Activated naive CD4-positive, alpha-beta T cell treated with anti-CD3 and anti-CD28 coated beads for 36 hours (primary cell): ENCODE measurements at regions of chr10 and their contacts with region 1.

Region 1: GRCh38 chr10:72364239-72364777 is 9.6 kb upstream of the DNAJB12 start:
- DNase-seq: peak; percentile 94
- H3K4me3 Mint-ChIP-seq: no peak overlapping the region
- H3K27ac Mint-ChIP-seq: peak overlapping the region; percentile 74
- H3K4me1 Mint-ChIP-seq: peaks cover 10% of the 10 kb centered on the region
- H3K27me3 Mint-ChIP-seq: no peaks in the 10 kb centered on the region

Region 2: DNA sequence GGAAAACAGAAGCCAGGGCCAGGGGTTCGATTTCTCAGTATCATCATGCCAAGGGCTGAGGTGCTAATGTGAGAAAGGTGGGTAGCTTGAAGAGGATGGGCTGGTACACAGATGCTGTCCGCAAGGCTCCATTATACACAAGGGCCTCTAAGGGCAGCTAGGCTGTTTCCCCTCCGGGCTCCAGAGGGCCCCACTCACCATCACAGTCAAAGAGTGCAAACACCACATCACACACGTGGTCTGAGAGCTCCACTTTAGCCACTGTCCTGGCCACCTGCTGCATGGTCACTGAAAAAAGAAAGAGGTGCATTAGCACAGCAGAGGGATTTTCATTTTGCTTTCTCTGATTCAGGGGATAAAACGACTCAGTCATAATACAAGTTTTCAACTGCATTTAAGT is 11.3 kb after region 1 on chr10:
- CTCF ChIA-PET with region 1: interaction called, 17 read pairs
- intact Hi-C with region 1: no loop called
- DNase-seq: no peak
- H3K4me3 Mint-ChIP-seq: no peak overlapping the region
- H3K27ac Mint-ChIP-seq: no peak overlapping the region
- H3K4me1 Mint-ChIP-seq: peaks cover 2% of the 10 kb centered on the region
- H3K27me3 Mint-ChIP-seq: no peaks in the 10 kb centered on the region

Region 3: DNA sequence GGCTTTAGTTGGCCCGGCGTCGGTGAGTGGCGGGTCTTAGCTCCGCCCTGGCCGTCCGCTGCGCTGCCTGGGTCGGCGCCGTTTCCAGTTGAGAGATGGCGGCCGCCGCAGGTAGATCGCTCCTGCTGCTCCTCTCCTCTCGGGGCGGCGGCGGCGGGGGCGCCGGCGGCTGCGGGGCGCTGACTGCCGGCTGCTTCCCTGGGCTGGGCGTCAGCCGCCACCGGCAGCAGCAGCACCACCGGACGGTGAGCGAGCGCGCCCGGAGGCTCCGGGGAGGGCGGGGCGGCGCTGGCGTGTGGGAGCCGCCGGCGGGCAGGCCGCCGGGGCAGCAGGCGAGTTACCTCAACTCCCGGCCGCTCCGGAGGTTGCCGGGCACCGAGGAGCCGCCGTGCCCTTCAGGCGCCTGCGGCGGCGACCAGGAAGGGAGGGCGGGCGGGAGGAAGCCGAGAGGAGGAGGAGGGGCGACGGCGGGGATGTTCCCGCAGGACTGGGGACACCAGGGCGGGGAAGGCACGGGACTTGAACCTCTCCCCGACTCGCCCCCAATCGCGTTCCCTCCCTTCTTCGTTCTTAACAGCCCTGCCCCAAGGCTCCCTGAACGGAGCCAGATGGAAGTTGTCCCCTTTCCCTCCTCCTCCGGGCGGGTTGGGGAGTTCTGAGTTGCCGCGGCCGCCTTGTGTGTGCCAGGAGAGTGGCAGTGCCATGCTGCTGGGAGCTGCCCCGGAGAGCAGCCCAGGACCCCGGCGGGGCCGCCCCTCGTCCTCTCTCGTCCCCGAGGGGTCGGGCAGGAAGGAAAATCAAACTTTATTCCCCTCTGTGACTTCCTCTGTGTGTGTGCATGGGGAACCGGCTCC is 328.0 kb after region 1 on chr10 and contains the start of gene MCU:
- CTCF ChIA-PET with region 1: interaction called, 11 read pairs
- intact Hi-C with region 1: loop called (anchors 1 kb)
- DNase-seq: peak; percentile 95
- H3K4me3 Mint-ChIP-seq: peak within 1 kb of the TSS; percentile 83
- H3K27ac Mint-ChIP-seq: no peak within 1 kb of the TSS
- H3K4me1 Mint-ChIP-seq: peaks cover 32% of the 10 kb centered on the region
- H3K27me3 Mint-ChIP-seq: no peaks in the 10 kb centered on the region
- total RNA-seq, gene MCU: 23.6 to 25.6 TPM

Region 4: GRCh38 chr10:72875250-72876055 is 511.1 kb after region 1 on chr10:
- CTCF ChIA-PET with region 1: interaction called, 11 read pairs
- intact Hi-C with region 1: loop called (anchors 1 kb)
- DNase-seq: peak; percentile 7
- H3K4me3 Mint-ChIP-seq: no peak overlapping the region
- H3K27ac Mint-ChIP-seq: no peak overlapping the region
- H3K4me1 Mint-ChIP-seq: no peaks in the 10 kb centered on the region
- H3K27me3 Mint-ChIP-seq: no peaks in the 10 kb centered on the region

Region 5: GRCh38 chr10:73159038-73159648 is 794.8 kb after region 1 on chr10:
- CTCF ChIA-PET with region 1: no interaction called
- intact Hi-C with region 1: loop called (anchors 1 kb)
- DNase-seq: peak; percentile 79
- H3K4me3 Mint-ChIP-seq: no peak overlapping the region
- H3K27ac Mint-ChIP-seq: no peak overlapping the region
- H3K4me1 Mint-ChIP-seq: peaks cover 34% of the 10 kb centered on the region
- H3K27me3 Mint-ChIP-seq: no peaks in the 10 kb centered on the region